ENCODE measurements at regions of chr17 and their contacts with region 1.

Region 1: GRCh38 chr17:76501018-76501826 is at the start of gene RHBDF2:
- DNase-seq: peak; percentile 79
- ATAC-seq: peak; percentile 70
- H3K4me3 ChIP-seq: peak within 1 kb of the TSS; percentile 90 to 99 (median 96)
- H3K27ac ChIP-seq: peak within 1 kb of the TSS; percentile 64
- H3K4me1 ChIP-seq: peaks cover 65% of the 10 kb centered on the region
- H3K27me3 ChIP-seq: no peaks in the 10 kb centered on the region; a peak in 1 of 5 replicates
- CTCF ChIP-seq: no peak; the same call in 1 of the 2 replicates
- EP300 ChIP-seq: 0 out of 4 replicates have a peak, but pooled peaks of 1 of the 2 experiments have one; percentile 17
- POLR2A ChIP-seq: peak; percentile 66 to 94; a peak in 3 of 4 replicates
- RAD21 ChIP-seq: peak; percentile 59
- total RNA-seq, gene RHBDF2: 4.2 and 7.8 TPM in 2 replicates

Region 2: DNA sequence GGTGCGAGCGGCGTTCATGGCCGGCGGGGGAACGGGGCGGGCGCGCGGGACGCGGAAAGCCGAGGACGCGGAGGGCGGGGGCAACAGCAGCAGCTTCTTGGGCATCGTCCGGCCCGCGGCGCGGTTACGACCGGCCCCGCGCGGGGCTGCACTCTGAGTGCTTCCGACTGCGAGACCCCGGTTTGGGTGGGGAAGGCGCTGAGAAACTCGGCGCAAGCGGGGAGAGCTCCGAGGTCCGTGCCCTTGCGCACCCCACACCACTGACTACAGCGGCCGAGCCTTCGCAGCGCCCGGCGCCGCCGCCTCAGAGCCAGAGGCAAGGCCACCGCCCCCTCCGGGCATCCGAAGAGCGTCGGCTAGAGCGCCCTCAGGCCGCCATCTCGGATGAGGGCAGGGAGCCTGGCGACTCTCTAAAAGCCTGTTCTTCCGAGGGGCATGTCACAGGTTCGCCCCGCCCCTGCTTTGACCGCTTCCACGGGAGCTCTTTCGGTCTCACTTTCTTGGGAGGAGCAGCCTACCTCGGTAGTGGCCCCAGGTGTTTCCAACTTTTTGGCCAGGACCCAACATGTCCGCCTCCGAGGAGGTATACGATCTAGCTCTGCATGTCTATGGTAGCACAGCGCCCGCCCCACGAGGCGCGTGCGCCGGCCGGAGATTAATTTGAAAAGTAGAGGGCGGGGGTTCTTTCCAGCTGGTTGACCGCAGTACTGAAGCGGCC is 147.5 kb before region 1 on chr17 and contains the start of gene PRPSAP1:
- CTCF ChIA-PET with region 1: no interaction called
- POLR2A ChIA-PET with region 1: interaction called, 22 read pairs
- in situ Hi-C with region 1: no loop called
- intact Hi-C with region 1: no loop called
- DNase-seq: peak; percentile 90
- ATAC-seq: peak; percentile 88
- H3K4me3 ChIP-seq: peak within 1 kb of the TSS; percentile 87 to 99 (median 98)
- H3K27ac ChIP-seq: peak within 1 kb of the TSS; percentile 99
- H3K4me1 ChIP-seq: peaks cover 59% of the 10 kb centered on the region
- H3K27me3 ChIP-seq: no peaks in the 10 kb centered on the region; a peak in 1 of 5 replicates
- CTCF ChIP-seq: peak; percentile 51
- EP300 ChIP-seq: peak in 1 of 2 experiments; percentile 3; a peak in 1 of 4 replicates
- POLR2A ChIP-seq: peak; percentile 98 to 100
- RAD21 ChIP-seq: peak; percentile 67
- total RNA-seq, gene PRPSAP1: 91.1 and 115 TPM in 2 replicates

Region 3: DNA sequence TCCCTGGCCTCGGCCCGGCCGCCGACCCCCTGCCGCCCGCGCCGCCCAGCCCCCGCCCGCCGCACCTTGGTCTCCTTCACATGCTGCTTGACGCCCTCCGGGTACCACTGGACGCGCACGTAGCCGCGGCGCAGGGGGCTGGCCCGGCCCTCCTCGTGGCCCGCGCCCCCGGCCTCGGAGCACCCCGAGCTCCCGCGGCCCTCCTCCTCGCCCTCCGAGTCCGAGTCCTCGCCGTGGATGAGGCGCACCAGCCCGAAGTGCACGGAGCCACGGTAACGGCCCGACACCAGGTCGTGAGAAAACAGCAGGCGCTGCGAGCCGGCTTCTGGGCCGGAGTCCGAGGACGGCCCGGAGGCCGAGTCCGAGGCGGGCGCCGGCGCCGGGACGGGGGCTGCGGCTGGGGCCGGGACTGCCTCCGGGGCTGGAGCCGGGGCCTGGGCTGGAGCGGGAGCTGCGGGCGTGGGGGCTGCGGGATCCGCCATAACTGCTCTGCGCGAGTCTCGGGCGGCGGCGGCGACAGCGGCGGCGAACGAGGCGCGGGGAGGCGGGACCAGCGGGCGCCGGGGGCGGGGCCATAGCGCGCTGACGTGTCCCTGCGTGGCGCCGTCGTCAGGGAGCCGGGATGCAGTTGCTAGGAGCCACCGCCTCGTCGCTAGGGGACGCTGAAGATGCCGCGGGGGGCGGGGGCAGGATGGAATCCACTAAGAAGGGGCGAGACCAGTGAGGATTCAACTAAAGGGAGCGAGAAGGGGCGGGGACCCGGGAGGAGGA is 48.4 kb before region 1 on chr17 and contains the start of gene UBE2O:
- CTCF ChIA-PET with region 1: no interaction called
- POLR2A ChIA-PET with region 1: interaction called, 26 read pairs
- in situ Hi-C with region 1: no loop called
- intact Hi-C with region 1: no loop called
- DNase-seq: peak; percentile 83
- ATAC-seq: peak; percentile 92
- H3K4me3 ChIP-seq: peak within 1 kb of the TSS; percentile 84 to 97 (median 92)
- H3K27ac ChIP-seq: peak within 1 kb of the TSS; percentile 67
- H3K4me1 ChIP-seq: peaks cover 42% of the 10 kb centered on the region
- H3K27me3 ChIP-seq: no peaks in the 10 kb centered on the region; a peak in 1 of 5 replicates
- CTCF ChIP-seq: peak; percentile 87
- EP300 ChIP-seq: no peak
- POLR2A ChIP-seq: peak in 1 of 2 experiments; percentile 90; a peak in 2 of 4 replicates
- RAD21 ChIP-seq: peak; percentile 42; the same call in 1 of the 2 replicates
- total RNA-seq, gene UBE2O: 21.5 and 22.3 TPM in 2 replicates

Region 4: GRCh38 chr17:76473541-76473985 is 27.7 kb before region 1 on chr17:
- CTCF ChIA-PET with region 1: interaction called, 86 read pairs
- POLR2A ChIA-PET with region 1: interaction called, 59 read pairs
- in situ Hi-C with region 1: loop called (anchors 5 kb)
- intact Hi-C with region 1: no loop called
- DNase-seq: no peak
- ATAC-seq: peak; percentile 80
- H3K4me3 ChIP-seq: no peak overlapping the region
- H3K27ac ChIP-seq: no peak overlapping the region
- H3K4me1 ChIP-seq: peaks cover 19% of the 10 kb centered on the region
- H3K27me3 ChIP-seq: no peaks in the 10 kb centered on the region
- CTCF ChIP-seq: peak; percentile 78
- EP300 ChIP-seq: no peak
- POLR2A ChIP-seq: no peak
- RAD21 ChIP-seq: peak; percentile 82

Region 5: DNA sequence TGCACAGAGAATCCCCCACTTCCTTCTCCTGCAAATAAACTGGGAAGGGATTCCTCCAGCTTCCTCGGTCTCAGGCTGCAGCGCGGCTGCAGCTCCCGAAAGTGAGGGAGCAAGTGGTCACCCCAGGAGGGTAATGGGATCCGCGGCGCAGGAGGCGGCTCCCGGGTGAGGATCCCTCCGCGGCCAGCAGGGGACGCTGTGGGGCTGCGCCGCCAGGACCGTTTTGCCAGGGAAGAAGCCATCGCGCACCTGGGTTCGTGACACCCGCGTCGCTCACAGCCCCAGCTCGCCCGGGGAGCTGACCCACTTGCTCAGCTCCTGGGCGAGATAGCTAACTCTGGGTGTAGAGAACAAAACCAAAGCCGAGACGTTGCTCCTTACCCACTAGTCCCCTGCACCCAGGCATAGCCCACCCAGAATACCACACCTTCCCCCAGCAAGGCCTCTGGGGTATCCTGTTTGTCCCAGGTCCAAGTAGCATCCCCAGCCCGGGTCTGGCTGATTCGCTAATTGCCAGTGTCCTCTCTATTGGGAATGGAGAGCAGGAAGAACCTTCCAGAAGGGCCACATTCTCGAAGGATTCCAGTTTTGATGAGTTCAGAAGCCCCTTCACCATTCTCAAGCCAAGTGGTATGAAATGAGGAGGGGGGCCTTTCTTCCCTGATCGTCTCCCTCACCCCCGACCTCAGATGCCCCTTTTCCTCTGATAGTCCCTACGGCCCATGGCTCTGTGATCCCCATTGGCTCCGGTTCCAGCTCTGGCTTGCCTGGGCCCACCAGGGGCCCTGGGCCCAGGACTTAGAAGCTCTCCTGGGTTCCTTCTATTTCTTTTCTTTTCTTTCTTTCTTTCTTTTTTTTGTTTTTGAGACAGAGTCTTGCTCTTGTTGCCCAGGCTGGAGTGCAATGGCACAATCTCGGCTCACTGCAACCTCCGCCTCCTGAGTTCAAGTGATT is 22.1 kb after region 1 on chr17:
- CTCF ChIA-PET with region 1: no interaction called
- POLR2A ChIA-PET with region 1: interaction called, 19 read pairs
- in situ Hi-C with region 1: no loop called
- intact Hi-C with region 1: no loop called
- DNase-seq: peak; percentile 53
- ATAC-seq: peak; percentile 58
- H3K4me3 ChIP-seq: peak overlapping the region in 1 of 3 experiments; percentile 64; a peak in 2 of 6 replicates
- H3K27ac ChIP-seq: no peak overlapping the region
- H3K4me1 ChIP-seq: peaks cover 85% of the 10 kb centered on the region
- H3K27me3 ChIP-seq: peaks cover 8 to 32% of the 10 kb centered on the region in 2 experiments
- CTCF ChIP-seq: peak; percentile 100
- EP300 ChIP-seq: no peak; a peak in 1 of 4 replicates
- POLR2A ChIP-seq: no peak
- RAD21 ChIP-seq: peak; percentile 100

Region 6: DNA sequence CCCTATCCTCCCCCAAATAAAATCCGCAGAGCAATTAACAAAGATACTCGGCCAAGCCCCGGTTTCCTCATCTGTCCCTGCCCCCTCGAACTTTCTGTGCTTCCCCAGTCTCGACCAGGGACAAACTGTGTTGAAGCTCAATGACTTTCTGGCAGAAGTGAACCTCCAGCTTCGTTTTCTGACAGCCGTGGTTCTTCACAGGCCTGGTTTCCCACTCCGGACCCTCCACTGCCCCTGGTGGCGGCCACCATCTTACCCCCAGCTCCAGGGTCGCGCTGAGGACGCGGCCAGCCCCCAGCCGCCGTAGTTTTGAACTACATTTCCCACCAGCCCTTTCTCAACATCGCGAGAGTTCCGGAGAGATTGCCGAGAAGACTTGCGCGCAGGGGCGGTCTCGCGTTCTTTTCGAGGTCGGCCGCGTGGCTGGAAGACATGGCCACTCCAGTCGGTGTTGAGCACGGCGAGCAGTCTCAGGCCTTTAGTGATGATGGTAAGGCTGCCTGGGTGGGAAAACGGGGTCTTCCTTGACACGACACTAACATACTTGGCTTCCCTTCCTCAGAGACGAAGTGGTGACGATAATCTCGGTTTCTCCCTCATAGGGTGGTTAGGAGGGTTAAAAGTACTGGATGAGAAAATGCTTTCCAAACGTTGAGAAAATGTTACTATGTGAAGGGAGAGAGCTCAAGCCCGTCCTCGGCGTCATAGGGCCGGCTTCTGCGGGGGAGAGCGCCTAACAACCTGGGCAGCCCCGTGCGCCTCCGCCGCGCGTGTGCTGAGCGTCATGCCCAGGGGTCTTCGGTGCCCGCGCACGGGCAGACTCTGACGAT is 56.4 kb after region 1 on chr17:
- CTCF ChIA-PET with region 1: no interaction called
- POLR2A ChIA-PET with region 1: interaction called, 25 read pairs
- in situ Hi-C with region 1: no loop called
- intact Hi-C with region 1: no loop called
- DNase-seq: peak; percentile 98
- ATAC-seq: peak; percentile 95
- H3K4me3 ChIP-seq: peak overlapping the region; percentile 79 to 89 (median 86)
- H3K27ac ChIP-seq: peak overlapping the region; percentile 90
- H3K4me1 ChIP-seq: peaks cover 67% of the 10 kb centered on the region
- H3K27me3 ChIP-seq: no peaks in the 10 kb centered on the region; a peak in 1 of 5 replicates
- CTCF ChIP-seq: peak; percentile 88
- EP300 ChIP-seq: peak in 1 of 2 experiments; percentile 11; a peak in 1 of 4 replicates
- POLR2A ChIP-seq: peak; percentile 99 to 100
- RAD21 ChIP-seq: peak; percentile 64

Region 7: GRCh38 chr17:77140166-77140878 is 639.1 kb after region 1 on chr17:
- CTCF ChIA-PET with region 1: no interaction called
- POLR2A ChIA-PET with region 1: no interaction called
- in situ Hi-C with region 1: no loop called
- intact Hi-C with region 1: no loop called
- DNase-seq: peak; percentile 96
- ATAC-seq: peak; percentile 91
- H3K4me3 ChIP-seq: peak overlapping the region; percentile 50 to 84 (median 78)
- H3K27ac ChIP-seq: peak overlapping the region; percentile 89
- H3K4me1 ChIP-seq: peaks cover 57% of the 10 kb centered on the region
- H3K27me3 ChIP-seq: no peaks in the 10 kb centered on the region; a peak in 1 of 5 replicates
- CTCF ChIP-seq: no peak
- EP300 ChIP-seq: peak; percentile 33 to 45; a peak in 2 of 4 replicates
- POLR2A ChIP-seq: peak; percentile 92 to 96
- RAD21 ChIP-seq: peak; percentile 76

Measured in HepG2 (cell line).